A549 (cell line): ENCODE measurements at regions of chr2 and their contacts with region 1.

Region 1: DNA sequence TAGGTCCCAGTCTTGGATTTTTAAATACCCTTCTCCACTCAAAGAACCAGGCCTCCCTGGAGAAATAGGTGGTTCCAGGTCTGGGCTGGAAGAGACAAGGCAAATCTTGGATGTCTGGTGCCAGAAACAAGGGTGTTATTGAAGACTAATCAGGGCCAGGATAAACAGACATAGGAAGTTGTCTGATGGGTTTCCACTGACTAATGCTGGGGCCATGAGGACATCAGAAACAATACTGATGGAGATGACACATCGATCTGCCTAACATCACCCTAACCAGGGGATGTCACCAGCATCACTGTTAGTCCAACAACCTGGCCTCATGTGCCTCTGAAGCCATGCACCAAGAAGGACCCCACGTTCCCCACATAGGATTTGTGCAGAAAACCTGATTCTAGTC is 42.5 kb upstream of the GLI2 start:
- DNase-seq: no peak
- ATAC-seq: no peak
- H3K4me3 ChIP-seq: no peak overlapping the region
- H3K27ac ChIP-seq: no peak overlapping the region
- H3K4me1 ChIP-seq: peaks cover 12% of the 10 kb centered on the region; the same call in 2 of the 3 replicates
- CTCF ChIP-seq: no peak
- EP300 ChIP-seq: no peak
- POLR2A ChIP-seq: no peak
- RAD21 ChIP-seq: no peak

Region 2: DNA sequence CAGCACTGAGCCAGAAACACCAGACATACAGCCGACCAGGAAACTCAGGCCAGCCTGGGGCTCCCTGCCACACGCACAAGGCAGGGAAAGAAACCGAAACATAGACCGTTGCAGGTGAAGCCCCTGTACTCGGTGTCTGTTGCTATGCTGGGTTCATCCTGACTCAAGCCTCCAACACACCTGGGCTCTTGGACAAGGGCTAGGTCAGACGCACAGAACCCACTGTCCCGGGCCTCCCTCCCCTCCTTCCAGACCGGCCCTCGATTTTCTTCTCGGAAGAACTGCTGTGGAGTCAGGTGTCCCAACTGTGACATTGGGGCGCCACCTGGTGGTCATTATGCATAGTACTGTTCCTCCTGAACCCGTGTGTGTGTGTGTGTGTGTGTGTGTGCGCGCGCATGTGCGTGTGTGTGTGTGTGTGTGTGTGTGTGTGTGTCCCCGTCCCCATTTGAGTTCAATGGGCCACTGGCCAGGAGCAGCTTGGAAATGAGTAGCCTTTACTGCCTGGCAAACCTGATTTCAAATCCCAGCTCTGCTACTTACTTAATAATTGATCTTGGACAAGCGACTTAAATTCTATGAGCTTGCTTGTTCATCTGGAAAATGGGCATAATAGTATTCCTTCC is 12.9 kb before region 1 on chr2:
- CTCF ChIA-PET with region 1: interaction called, 39 read pairs
- POLR2A ChIA-PET with region 1: no interaction called
- DNase-seq: peak; percentile 76 to 91
- ATAC-seq: peak; percentile 71 to 91
- H3K4me3 ChIP-seq: no peak overlapping the region
- H3K27ac ChIP-seq: no peak overlapping the region
- H3K4me1 ChIP-seq: no peaks in the 10 kb centered on the region
- CTCF ChIP-seq: peak; percentile 57
- EP300 ChIP-seq: no peak
- POLR2A ChIP-seq: no peak
- RAD21 ChIP-seq: peak; percentile 90 to 94

Region 3: DNA sequence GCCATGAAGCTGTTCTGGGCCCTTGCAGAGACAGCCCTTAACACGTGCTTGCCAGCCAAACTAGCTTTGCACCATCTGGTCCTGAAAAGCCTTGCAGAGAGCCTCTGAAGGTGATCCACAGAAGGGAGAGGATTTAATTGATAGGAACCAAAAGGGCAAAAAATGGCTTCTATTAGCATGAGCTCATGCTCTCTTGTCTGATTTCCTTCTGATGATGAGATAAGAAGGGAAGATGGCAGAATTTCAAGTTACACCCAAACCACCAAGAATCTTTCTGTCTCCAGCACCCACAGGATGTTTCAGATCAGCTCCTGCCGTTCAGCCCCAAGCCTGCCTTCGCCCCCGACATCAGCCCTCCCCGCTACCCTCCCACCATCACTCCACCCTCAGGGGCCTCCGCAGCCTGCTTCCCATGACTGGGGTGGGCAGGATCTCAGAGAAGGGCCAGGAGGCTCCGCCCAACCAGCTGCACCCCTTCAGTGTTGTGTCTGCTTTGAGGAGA is 19.1 kb after region 1 on chr2:
- CTCF ChIA-PET with region 1: interaction called, 43 read pairs
- POLR2A ChIA-PET with region 1: no interaction called
- DNase-seq: no peak
- ATAC-seq: no peak
- H3K4me3 ChIP-seq: no peak overlapping the region
- H3K27ac ChIP-seq: no peak overlapping the region
- H3K4me1 ChIP-seq: no peaks in the 10 kb centered on the region
- CTCF ChIP-seq: no peak
- EP300 ChIP-seq: no peak
- POLR2A ChIP-seq: no peak
- RAD21 ChIP-seq: no peak

Region 4: GRCh38 chr2:120735746-120736170 is 42.6 kb after region 1 on chr2 and contains the start of gene GLI2:
- CTCF ChIA-PET with region 1: interaction called, 22 read pairs
- POLR2A ChIA-PET with region 1: no interaction called
- DNase-seq: peak; percentile 61 to 89
- ATAC-seq: peak; percentile 69 to 75
- H3K4me3 ChIP-seq: peak within 1 kb of the TSS; percentile 73
- H3K27ac ChIP-seq: peak within 1 kb of the TSS; percentile 93 to 98
- H3K4me1 ChIP-seq: peaks cover 39% of the 10 kb centered on the region
- CTCF ChIP-seq: peak; percentile 81
- EP300 ChIP-seq: no peak
- POLR2A ChIP-seq: peak; percentile 40
- RAD21 ChIP-seq: peak; percentile 45 to 80
- polyA plus RNA-seq, gene GLI2: 5.6 and 7.5 TPM in 2 replicates

Region 5: GRCh38 chr2:120885320-120885719 is 192.2 kb after region 1 on chr2:
- CTCF ChIA-PET with region 1: interaction called, 10 read pairs
- POLR2A ChIA-PET with region 1: no interaction called
- DNase-seq: no peak
- ATAC-seq: peak in 1 of 2 experiments; percentile 66; a peak in 3 of 6 replicates
- H3K4me3 ChIP-seq: no peak overlapping the region
- H3K27ac ChIP-seq: peak overlapping the region in 1 of 2 experiments; percentile 38; a peak in 2 of 6 replicates
- H3K4me1 ChIP-seq: peaks cover 9% of the 10 kb centered on the region; the same call in 1 of the 3 replicates
- CTCF ChIP-seq: no peak
- EP300 ChIP-seq: no peak
- POLR2A ChIP-seq: no peak
- RAD21 ChIP-seq: no peak

Region 6: DNA sequence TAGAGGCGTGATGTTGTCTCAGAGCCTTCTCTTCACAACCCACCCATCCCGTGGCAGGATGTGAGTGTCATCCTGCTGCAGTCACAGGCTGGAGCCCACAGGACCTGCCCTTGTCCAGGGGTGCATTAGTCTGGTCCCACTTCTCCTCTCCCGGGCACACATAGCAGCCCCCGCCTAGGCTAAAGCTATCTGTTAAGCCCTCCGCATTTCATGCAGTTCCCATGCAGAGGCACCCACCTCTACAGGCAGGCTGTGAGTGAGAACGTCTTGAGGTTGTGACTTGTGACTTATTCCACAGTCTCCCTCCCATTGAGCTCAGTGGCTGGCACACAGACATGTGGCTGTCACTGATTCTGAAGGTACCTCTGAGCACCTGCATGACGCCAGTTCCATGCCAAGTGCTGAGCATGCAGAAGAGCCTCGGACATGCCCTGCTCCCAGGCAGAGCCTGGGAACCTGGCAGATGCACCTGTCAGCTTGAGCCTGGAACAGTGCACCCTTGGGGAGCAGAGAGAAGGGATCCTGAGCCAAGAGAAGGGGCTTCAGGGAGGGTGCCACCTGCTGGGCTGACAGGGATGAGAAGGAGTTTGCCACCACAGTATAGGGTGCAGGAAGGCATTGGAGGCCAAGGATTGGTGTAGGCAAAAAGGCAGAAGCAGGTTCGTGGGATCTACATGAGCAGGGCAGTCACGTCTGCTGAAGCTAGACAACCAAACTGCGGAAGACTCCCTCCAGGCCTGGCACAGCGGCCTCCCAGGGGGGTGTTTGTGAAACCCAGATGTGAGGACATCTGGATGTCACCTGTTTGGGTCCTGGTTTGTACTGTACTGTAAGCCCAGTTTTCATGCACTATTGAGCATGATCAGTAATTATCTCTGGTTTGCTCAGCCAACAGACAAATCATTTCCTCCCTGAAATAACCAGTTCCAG is 256.2 kb after region 1 on chr2:
- CTCF ChIA-PET with region 1: interaction called, 14 read pairs
- POLR2A ChIA-PET with region 1: no interaction called
- DNase-seq: peak; percentile 33 to 53
- ATAC-seq: peak; percentile 55 to 79; a peak in 5 of 6 replicates
- H3K4me3 ChIP-seq: no peak overlapping the region
- H3K27ac ChIP-seq: peak overlapping the region; percentile 66 to 97
- H3K4me1 ChIP-seq: peaks cover 63% of the 10 kb centered on the region
- CTCF ChIP-seq: peak; percentile 55
- EP300 ChIP-seq: no peak
- POLR2A ChIP-seq: no peak
- RAD21 ChIP-seq: peak; percentile 49 to 55

Region 7: GRCh38 chr2:121076885-121077549 is 383.9 kb after region 1 on chr2:
- CTCF ChIA-PET with region 1: interaction called, 858 read pairs
- POLR2A ChIA-PET with region 1: interaction called, 21 read pairs
- DNase-seq: peak; percentile 58 to 75
- ATAC-seq: peak; percentile 48 to 73
- H3K4me3 ChIP-seq: no peak overlapping the region
- H3K27ac ChIP-seq: peak overlapping the region in 1 of 2 experiments; percentile 92; a peak in 2 of 6 replicates
- H3K4me1 ChIP-seq: peaks cover 29% of the 10 kb centered on the region
- CTCF ChIP-seq: peak; percentile 80
- EP300 ChIP-seq: no peak
- POLR2A ChIP-seq: no peak
- RAD21 ChIP-seq: peak; percentile 36